ENCODE measurements at regions of chr10 and their contacts with region 1.

Region 1: GRCh38 chr10:97686962-97687784 is at the start of gene AVPI1:
- DNase-seq: peak; percentile 98
- H3K4me3 ChIP-seq: peak within 1 kb of the TSS; percentile 41 to 62 (median 60)
- H3K27ac ChIP-seq: peak within 1 kb of the TSS; percentile 42
- H3K4me1 ChIP-seq: peaks cover 16% of the 10 kb centered on the region
- H3K27me3 ChIP-seq: no peaks in the 10 kb centered on the region
- CTCF ChIP-seq: no peak
- POLR2A ChIP-seq: peak; percentile 68
- total RNA-seq, gene AVPI1: 2.4 and 3.0 TPM in 2 replicates

Region 2: DNA sequence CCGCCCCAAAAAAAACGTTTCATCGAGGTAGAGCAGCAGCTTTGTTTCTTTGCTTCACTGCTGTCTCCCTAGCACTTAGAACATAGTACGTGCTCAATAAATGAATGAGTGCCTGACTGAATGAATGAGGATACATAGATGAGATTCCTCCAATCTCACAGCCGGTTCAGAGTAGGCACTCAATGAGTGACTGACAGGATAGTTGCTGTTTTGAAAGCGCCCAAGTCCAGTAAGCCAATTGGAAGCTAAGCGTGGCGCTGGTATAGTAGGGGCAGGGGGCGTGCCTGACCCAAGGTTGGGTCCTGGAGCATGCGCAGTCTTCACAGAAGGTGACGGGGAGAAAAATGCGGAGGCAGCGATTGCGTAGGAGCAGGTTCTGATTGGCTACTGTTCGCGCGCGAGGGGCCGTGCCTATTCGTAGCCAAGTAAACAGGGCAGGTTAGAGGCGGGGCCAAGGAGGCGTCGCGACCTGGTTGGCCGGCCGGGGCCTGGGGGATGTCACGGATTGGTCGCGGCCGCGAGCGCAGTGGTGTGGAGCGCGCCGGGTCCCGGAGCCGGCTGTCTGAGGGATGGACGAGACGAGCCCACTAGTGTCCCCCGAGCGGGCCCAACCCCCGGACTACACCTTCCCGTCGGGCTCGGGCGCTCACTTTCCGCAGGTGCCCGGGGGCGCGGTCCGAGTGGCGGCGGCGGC is 46.9 kb before region 1 on chr10 and contains the start of gene PI4K2A:
- CTCF ChIA-PET with region 1: no interaction called
- POLR2A ChIA-PET with region 1: no interaction called
- dilution Hi-C with region 1: no loop called
- intact Hi-C with region 1: loop called (anchors 1 kb)
- DNase-seq: peak; percentile 100
- H3K4me3 ChIP-seq: peak within 1 kb of the TSS; percentile 51 to 73 (median 69)
- H3K27ac ChIP-seq: peak within 1 kb of the TSS; percentile 9
- H3K4me1 ChIP-seq: peaks cover 9% of the 10 kb centered on the region
- H3K27me3 ChIP-seq: no peaks in the 10 kb centered on the region
- CTCF ChIP-seq: no peak
- POLR2A ChIP-seq: peak; percentile 62
- total RNA-seq, gene PI4K2A: 19.7 and 20.4 TPM in 2 replicates

Region 3: GRCh38 chr10:97701438-97702069 is 14.4 kb after region 1 on chr10:
- CTCF ChIA-PET with region 1: interaction called, 49 read pairs
- POLR2A ChIA-PET with region 1: interaction called, 4 read pairs
- dilution Hi-C with region 1: no loop called
- intact Hi-C with region 1: no loop called
- DNase-seq: peak; percentile 70
- H3K4me3 ChIP-seq: no peak overlapping the region
- H3K27ac ChIP-seq: no peak overlapping the region
- H3K4me1 ChIP-seq: no peaks in the 10 kb centered on the region
- H3K27me3 ChIP-seq: peaks cover 2 to 6% of the 10 kb centered on the region in 2 experiments
- CTCF ChIP-seq: peak; percentile 79 to 85
- POLR2A ChIP-seq: no peak

Region 4: GRCh38 chr10:97724341-97724941 is 37.3 kb after region 1 on chr10:
- CTCF ChIA-PET with region 1: interaction called, 20 read pairs
- POLR2A ChIA-PET with region 1: interaction called, 3 read pairs
- dilution Hi-C with region 1: no loop called
- intact Hi-C with region 1: loop called (anchors 1 kb)
- DNase-seq: no peak
- H3K4me3 ChIP-seq: no peak overlapping the region
- H3K27ac ChIP-seq: no peak overlapping the region
- H3K4me1 ChIP-seq: peaks cover 8% of the 10 kb centered on the region
- H3K27me3 ChIP-seq: no peaks in the 10 kb centered on the region
- CTCF ChIP-seq: no peak
- POLR2A ChIP-seq: no peak

Region 5: DNA sequence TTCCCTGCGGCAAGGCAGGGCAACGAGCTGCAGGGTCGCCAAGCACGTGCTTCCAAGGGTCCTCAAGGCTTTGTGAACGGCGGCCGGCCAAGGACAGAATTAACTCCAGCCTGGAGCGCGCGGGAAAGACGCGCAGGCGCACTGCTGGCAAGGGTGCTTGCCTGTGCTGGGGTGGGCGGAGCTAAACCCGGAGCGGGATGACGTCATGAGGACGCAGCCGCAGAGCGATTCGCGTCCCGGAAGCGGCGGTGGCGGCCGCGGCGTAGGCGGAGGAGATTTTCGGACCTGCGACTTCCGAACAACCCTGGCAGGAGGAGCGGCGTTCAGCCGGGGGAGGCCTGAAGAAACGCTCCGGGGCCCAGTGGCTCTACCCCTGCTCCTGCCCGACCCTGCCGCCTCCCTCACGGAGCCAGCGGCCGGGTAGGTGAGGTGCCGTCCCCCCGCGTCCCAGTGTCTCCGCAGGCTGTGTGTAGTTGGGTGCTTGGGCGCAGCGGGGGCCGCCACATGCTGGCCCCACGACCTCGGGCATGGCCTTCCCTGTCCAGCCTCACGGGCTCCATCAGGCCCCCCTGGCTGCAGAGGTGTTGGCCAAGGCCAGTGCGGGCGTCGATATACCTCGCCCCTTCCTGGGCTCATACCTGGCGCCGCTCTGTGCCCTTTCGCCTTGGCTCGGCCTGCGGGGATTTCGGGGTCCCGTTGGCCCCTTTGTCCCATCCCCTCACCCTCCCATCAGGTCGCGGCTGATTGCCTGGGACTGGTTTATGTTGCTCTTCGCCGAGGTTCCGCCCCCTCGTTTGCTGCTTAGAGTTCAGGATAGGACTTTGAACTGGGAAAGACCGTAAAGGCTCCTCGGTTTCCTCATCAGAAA is 50.0 kb after region 1 on chr10 and contains the start of gene ZFYVE27:
- CTCF ChIA-PET with region 1: interaction called, 4 read pairs
- POLR2A ChIA-PET with region 1: no interaction called
- dilution Hi-C with region 1: no loop called
- intact Hi-C with region 1: loop called (anchors 2 kb)
- DNase-seq: peak; percentile 95
- H3K4me3 ChIP-seq: peak within 1 kb of the TSS; percentile 46 to 72 (median 63)
- H3K27ac ChIP-seq: peak within 1 kb of the TSS; percentile 37
- H3K4me1 ChIP-seq: peaks cover 8% of the 10 kb centered on the region
- H3K27me3 ChIP-seq: no peaks in the 10 kb centered on the region
- CTCF ChIP-seq: no peak
- POLR2A ChIP-seq: peak; percentile 93
- total RNA-seq, gene ZFYVE27: 23.7 and 24.2 TPM in 2 replicates